ENCODE measurements at regions of chr14 and their contacts with region 1.

Region 1: GRCh38 chr14:105168979-105169507 is 467 bp upstream of the JAG2 start:
- DNase-seq: no peak
- H3K4me3 ChIP-seq: peak overlapping the region in 1 of 2 donors; percentile 57
- H3K27ac ChIP-seq: no peak overlapping the region
- H3K4me1 ChIP-seq: peaks cover 7 to 26% of the 10 kb centered on the region in 2 donors
- H3K27me3 ChIP-seq: no peaks in the 10 kb centered on the region
- CTCF ChIP-seq: peak in 2 of 3 experiments; percentile 21 to 28

Region 2: DNA sequence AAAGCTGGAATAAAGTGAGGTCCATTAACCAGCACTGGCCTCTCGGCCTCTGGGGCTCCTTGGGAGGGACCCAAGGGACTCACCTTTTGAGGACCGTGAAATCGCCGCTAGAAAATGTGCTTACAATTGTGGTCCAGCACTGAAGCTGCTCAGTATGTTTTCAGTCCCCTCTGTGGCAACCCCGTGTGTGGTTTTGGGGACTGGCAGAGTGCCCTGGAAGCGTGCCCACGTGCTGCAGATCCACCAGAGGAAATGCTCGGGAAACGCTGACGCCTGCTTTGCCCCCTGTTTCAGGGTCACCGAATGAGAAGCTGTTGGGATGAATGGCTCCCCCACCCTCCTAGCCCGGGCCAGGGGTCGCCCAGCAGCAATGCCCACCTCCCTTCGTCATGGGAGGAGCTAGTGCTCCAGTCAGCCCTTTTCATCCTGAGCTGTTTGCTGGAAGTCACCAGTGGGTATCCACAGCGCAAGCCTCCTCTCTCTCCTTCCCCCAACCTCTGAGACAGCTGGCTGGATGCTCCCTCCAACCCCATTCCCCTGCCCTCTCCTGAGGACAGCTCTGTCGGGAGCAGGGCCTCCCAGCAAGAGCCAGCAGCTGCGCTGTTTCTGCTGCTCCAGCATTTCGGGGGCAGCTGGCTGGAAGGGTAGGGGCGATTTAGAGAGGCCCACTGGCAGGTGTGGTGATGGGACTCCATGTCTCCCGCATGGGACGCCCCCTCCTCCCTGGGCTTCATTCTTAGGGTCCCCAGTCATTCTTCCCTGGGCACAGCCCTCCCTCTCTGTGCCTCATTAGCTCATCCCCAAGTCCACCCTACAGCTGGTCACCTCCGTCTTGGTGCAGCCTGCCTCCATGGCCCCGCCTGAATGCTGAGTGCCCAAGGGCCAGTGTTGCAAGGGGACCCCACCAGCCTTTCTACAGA is 1288.4 kb before region 1 on chr14:
- intact Hi-C with region 1: loop called (anchors 10 kb)
- DNase-seq: peak; percentile 18 to 91
- H3K4me3 ChIP-seq: peak overlapping the region; percentile 24 to 49
- H3K27ac ChIP-seq: peak overlapping the region; percentile 54 to 66
- H3K4me1 ChIP-seq: peaks cover 8 to 22% of the 10 kb centered on the region in 2 donors
- H3K27me3 ChIP-seq: no peaks in the 10 kb centered on the region
- CTCF ChIP-seq: no peak

Region 3: GRCh38 chr14:105005929-105006830 is 162.9 kb before region 1 on chr14:
- intact Hi-C with region 1: no loop called
- DNase-seq: no peak
- H3K4me3 ChIP-seq: no peak overlapping the region
- H3K27ac ChIP-seq: no peak overlapping the region
- H3K4me1 ChIP-seq: no peaks in the 10 kb centered on the region
- H3K27me3 ChIP-seq: no peaks in the 10 kb centered on the region
- CTCF ChIP-seq: no peak

Measured in ascending aorta (tissue), 2 donors.